HepG2 (cell line): ENCODE measurements at regions of chr7 and their contacts with region 1.

Region 1: GRCh38 chr7:11427686-11428273 is 404.2 kb downstream of the THSD7A start:
- DNase-seq: peak; percentile 27
- ATAC-seq: peak; percentile 53; the same call in 2 of the 3 replicates
- H3K4me3 ChIP-seq: no peak overlapping the region
- H3K27ac ChIP-seq: no peak overlapping the region
- H3K4me1 ChIP-seq: no peaks in the 10 kb centered on the region
- H3K27me3 ChIP-seq: no peaks in the 10 kb centered on the region
- CTCF ChIP-seq: peak; percentile 64
- EP300 ChIP-seq: no peak
- POLR2A ChIP-seq: no peak
- RAD21 ChIP-seq: no peak

Region 2: GRCh38 chr7:11615174-11615573 is 187.4 kb after region 1 on chr7:
- CTCF ChIA-PET with region 1: no interaction called
- POLR2A ChIA-PET with region 1: no interaction called
- in situ Hi-C with region 1: no loop called
- intact Hi-C with region 1: loop called (anchors 2 kb)
- DNase-seq: no peak
- ATAC-seq: no peak
- H3K4me3 ChIP-seq: no peak overlapping the region
- H3K27ac ChIP-seq: no peak overlapping the region
- H3K4me1 ChIP-seq: no peaks in the 10 kb centered on the region
- H3K27me3 ChIP-seq: no peaks in the 10 kb centered on the region
- CTCF ChIP-seq: no peak
- EP300 ChIP-seq: no peak
- POLR2A ChIP-seq: no peak
- RAD21 ChIP-seq: no peak

Region 3: DNA sequence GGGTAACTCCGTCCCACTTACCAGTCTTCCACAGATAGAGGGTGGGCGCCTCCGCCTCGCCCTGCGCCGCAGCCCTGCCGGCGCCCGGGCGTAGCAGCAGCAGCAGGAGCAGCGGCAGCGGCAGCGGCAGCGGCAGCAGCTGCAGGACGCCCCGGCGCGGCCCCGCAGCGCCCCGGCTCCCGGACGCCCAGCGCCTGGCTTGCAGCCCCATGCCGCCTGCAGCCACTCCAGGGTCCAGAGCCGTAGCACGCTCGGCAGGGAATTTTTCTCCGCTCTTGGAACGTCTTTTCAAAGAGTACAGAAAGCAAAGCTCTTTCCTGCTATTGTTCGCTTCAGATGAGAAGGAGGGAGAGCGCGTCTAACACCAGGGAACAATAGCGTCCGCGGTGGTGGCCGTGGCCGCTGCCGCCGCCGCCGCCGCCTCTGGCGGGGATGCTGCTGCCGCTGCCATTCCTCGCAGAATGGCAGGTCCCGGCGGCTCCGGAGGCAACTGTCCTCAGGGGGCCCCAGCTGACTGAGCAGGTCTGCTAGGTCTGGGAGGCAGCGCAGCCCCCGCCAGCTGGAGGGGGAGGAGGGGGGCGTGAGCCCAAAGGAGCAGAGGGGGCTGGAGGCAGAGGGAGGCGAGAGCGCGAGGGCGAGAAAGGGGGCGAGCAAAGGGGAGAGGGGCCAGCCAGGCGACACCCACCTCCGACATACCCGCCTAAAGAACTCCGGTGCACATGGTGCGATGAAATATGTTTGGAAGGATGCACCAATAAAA is 404.1 kb after region 1 on chr7 and contains the start of gene THSD7A:
- CTCF ChIA-PET with region 1: no interaction called
- POLR2A ChIA-PET with region 1: no interaction called
- in situ Hi-C with region 1: no loop called
- intact Hi-C with region 1: loop called (anchors 1 kb)
- DNase-seq: peak; percentile 7
- ATAC-seq: peak; percentile 100
- H3K4me3 ChIP-seq: peak within 1 kb of the TSS; percentile 6 to 62 (median 26); a peak in 5 of 6 replicates
- H3K27ac ChIP-seq: no peak within 1 kb of the TSS
- H3K4me1 ChIP-seq: 0 out of 2 replicates have a peak, but pooled peaks cover 6% of the 10 kb centered on the region
- H3K27me3 ChIP-seq: peaks cover 0 to 13% of the 10 kb centered on the region in 2 experiments; a peak in 2 of 5 replicates
- CTCF ChIP-seq: no peak
- EP300 ChIP-seq: no peak
- POLR2A ChIP-seq: no peak
- RAD21 ChIP-seq: no peak; the same call in 1 of the 2 replicates
- total RNA-seq, gene THSD7A: 0.07 TPM in 1 of 2 replicates, not detected in the other

Region 4: GRCh38 chr7:12322284-12322902 is 894.6 kb after region 1 on chr7:
- CTCF ChIA-PET with region 1: no interaction called
- POLR2A ChIA-PET with region 1: no interaction called
- in situ Hi-C with region 1: no loop called
- intact Hi-C with region 1: loop called (anchors 1 kb)
- DNase-seq: peak; percentile 3
- ATAC-seq: no peak
- H3K4me3 ChIP-seq: no peak overlapping the region
- H3K27ac ChIP-seq: no peak overlapping the region
- H3K4me1 ChIP-seq: no peaks in the 10 kb centered on the region
- H3K27me3 ChIP-seq: no peaks in the 10 kb centered on the region
- CTCF ChIP-seq: peak; percentile 57
- EP300 ChIP-seq: no peak
- POLR2A ChIP-seq: no peak
- RAD21 ChIP-seq: no peak

Region 5: GRCh38 chr7:12490117-12490688 is 1062.4 kb after region 1 on chr7:
- CTCF ChIA-PET with region 1: no interaction called
- POLR2A ChIA-PET with region 1: no interaction called
- in situ Hi-C with region 1: loop called (anchors 25 kb)
- intact Hi-C with region 1: loop called (anchors 2 kb)
- DNase-seq: peak; percentile 5
- ATAC-seq: peak; percentile 53
- H3K4me3 ChIP-seq: no peak overlapping the region
- H3K27ac ChIP-seq: no peak overlapping the region
- H3K4me1 ChIP-seq: no peaks in the 10 kb centered on the region
- H3K27me3 ChIP-seq: no peaks in the 10 kb centered on the region
- CTCF ChIP-seq: peak; percentile 47; the same call in 1 of the 2 replicates
- EP300 ChIP-seq: no peak
- POLR2A ChIP-seq: no peak
- RAD21 ChIP-seq: no peak